Transverse colon (tissue), 4 donors: ENCODE measurements at regions of chr13 and their contacts with region 1.

Region 1: DNA sequence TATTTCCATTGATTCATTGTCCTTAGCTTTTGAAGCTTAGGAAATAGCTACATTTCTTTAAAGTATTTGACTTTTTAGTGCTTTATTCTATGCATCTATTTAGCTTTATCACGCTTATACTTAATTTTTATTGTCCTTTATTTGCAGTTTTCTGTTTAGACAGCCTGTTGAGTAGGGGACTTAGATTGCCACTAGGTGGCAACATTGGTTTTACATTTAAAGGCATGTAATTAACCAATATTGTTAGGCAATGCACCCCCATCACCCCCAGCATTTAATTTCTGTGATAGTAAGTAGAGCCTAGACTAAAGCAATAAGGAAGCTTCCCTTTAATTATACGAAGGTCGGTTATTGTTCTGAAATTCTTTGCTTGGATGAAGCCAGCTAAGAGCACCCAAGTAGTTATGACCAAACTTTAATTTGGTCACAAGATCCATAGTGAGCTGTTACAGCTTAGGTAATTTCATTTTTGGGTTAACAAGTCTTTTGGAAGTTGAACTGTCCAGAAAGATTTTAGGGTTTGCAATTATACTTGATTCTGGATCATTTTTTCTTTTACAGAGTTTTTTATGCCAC is 36.5 kb downstream of the B3GLCT start:
- DNase-seq: no peak
- H3K4me3 ChIP-seq: no peak overlapping the region
- H3K27ac ChIP-seq: no peak overlapping the region
- H3K4me1 ChIP-seq: no peaks in the 10 kb centered on the region
- H3K27me3 ChIP-seq: no peaks in the 10 kb centered on the region
- CTCF ChIP-seq: peak; percentile 60 to 76 (median 64)
- EP300 ChIP-seq: no peak
- POLR2A ChIP-seq: no peak

Region 2: DNA sequence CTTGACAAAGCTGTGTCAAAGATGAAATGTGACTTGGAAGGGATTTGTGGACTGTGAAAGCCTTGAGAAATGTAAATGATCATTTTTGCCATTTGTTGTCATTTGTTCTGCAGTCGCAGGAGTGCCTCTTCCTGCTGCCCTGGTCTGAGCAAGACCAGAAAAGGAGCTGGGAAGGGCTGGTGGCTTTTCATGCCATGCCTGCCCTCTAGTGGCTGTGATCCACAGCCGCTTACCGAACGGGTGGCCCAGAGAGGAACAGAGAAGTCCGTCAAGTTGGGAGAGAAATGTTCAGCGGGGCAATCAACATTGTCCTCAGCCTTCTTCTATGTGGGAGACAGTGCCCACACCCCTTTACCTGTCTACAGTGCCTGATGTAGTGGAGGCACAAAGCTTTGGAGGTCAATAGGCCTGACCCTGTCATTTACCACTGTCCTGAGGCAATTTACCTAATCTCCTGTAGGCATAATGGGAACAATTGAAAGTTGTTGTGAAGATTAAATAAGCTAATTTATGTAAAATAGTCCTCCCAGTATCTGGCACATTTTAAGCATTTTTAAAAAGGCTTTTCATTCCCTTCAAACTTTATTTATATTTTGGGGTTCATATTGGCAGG is 187.9 kb after region 1 on chr13:
- in situ Hi-C with region 1: loop called (anchors 5 to 10 kb)
- intact Hi-C with region 1: loop called (anchors 10 kb)
- DNase-seq: peak; percentile 78
- H3K4me3 ChIP-seq: no peak overlapping the region
- H3K27ac ChIP-seq: no peak overlapping the region
- H3K4me1 ChIP-seq: peaks cover 0 to 3% (median 0%) of the 10 kb centered on the region in 4 donors
- H3K27me3 ChIP-seq: no peaks in the 10 kb centered on the region
- CTCF ChIP-seq: peak; percentile 77 to 85 (median 79)
- EP300 ChIP-seq: no peak
- POLR2A ChIP-seq: no peak